Lower lobe of right lung (tissue), 2 donors: ENCODE measurements at regions of chr1 and their contacts with region 1.

Region 1: GRCh38 chr1:160428655-160429054 is 28.3 kb downstream of the VANGL2 start:
- DNase-seq: no peak
- ATAC-seq: peak; percentile 65 to 73
- H3K4me3 ChIP-seq: no peak overlapping the region
- H3K27ac ChIP-seq: peak overlapping the region; percentile 61
- H3K4me1 ChIP-seq: peaks cover 32% of the 10 kb centered on the region
- H3K27me3 ChIP-seq: no peaks in the 10 kb centered on the region
- CTCF ChIP-seq: peak; percentile 58

Region 2: DNA sequence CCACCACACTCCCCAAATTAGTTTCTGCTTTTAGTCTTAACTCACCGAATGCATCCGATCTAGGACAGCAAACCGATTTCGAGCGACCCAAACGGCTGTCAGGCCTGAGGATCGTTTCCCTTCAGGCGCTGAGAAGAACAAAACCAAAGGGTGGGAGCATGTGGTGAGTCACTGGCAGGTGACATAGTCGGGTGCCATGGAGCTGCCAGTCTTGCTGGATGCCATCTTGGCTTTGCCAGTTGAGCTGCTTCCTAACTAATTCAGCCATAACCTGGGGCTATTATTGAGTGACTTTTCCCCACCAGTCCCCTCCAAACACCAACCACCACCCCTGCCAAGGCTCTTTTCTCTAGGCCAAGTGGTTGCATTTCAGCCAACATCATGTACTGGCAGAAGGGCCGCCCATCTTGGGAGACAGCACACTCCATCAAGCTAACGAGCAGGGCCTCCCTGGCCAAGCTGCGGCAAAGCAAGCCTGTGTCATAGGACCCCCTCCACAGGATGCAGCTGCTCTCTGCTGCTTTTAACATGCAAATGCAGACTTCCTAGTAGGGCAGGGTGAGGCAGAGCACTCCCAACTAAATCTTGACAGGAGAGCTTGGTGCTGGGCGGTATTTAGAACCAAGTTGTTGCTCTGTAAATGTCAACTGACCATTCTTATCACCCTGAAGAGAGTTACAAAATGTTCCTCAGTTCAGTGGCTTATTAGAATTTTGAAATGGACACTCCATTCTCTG is 121.4 kb before region 1 on chr1:
- intact Hi-C with region 1: no loop called
- DNase-seq: no peak
- ATAC-seq: no peak
- H3K4me3 ChIP-seq: no peak overlapping the region
- H3K27ac ChIP-seq: no peak overlapping the region
- H3K4me1 ChIP-seq: no peaks in the 10 kb centered on the region
- H3K27me3 ChIP-seq: no peaks in the 10 kb centered on the region
- CTCF ChIP-seq: no peak

Region 3: GRCh38 chr1:160607011-160607671 is 178.5 kb after region 1 on chr1:
- intact Hi-C with region 1: loop called (anchors 5 kb)
- DNase-seq: no peak
- ATAC-seq: peak; percentile 92 to 93
- H3K4me3 ChIP-seq: no peak overlapping the region
- H3K27ac ChIP-seq: no peak overlapping the region
- H3K4me1 ChIP-seq: no peaks in the 10 kb centered on the region
- H3K27me3 ChIP-seq: no peaks in the 10 kb centered on the region
- CTCF ChIP-seq: peak; percentile 73

Region 4: DNA sequence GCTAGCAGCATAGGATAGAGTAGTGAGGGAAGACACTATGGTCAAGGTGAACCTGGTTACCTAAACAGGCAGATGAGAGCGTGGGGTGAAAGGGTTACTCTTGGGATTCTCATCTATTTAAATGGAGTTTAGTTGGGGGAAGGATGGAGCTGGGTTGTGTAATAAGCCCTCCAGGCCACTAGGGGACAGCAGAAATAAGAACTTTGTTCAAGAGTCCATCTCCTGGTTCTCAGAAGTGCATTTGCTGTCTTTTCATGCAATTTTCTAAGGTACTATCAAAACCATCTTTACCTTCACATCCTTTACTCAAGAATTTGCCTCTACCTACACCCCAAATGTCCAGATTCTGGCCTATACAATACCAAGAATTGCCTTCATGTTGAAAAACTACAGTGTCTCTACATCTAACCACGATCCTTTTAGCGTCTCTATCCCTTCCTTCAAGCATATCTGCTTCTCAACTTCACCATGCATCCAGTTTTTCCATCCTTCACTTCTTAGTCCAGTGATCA is 190.2 kb after region 1 on chr1:
- intact Hi-C with region 1: no loop called
- DNase-seq: no peak
- ATAC-seq: peak in 1 of 2 donors; percentile 32
- H3K4me3 ChIP-seq: no peak overlapping the region
- H3K27ac ChIP-seq: no peak overlapping the region
- H3K4me1 ChIP-seq: no peaks in the 10 kb centered on the region
- H3K27me3 ChIP-seq: no peaks in the 10 kb centered on the region
- CTCF ChIP-seq: peak; percentile 58